ENCODE measurements at regions of chr17 and their contacts with region 1.

Region 1: GRCh38 chr17:13967416-13967815 is 101.9 kb upstream of the COX10 start:
- DNase-seq: no peak
- H3K4me3 ChIP-seq: no peak overlapping the region
- CTCF ChIP-seq: no peak

Region 2: GRCh38 chr17:14004927-14005620 is 37.7 kb after region 1 on chr17:
- in situ Hi-C with region 1: loop called (anchors 5 kb)
- DNase-seq: no peak
- H3K4me3 ChIP-seq: no peak overlapping the region
- CTCF ChIP-seq: no peak

Region 3: DNA sequence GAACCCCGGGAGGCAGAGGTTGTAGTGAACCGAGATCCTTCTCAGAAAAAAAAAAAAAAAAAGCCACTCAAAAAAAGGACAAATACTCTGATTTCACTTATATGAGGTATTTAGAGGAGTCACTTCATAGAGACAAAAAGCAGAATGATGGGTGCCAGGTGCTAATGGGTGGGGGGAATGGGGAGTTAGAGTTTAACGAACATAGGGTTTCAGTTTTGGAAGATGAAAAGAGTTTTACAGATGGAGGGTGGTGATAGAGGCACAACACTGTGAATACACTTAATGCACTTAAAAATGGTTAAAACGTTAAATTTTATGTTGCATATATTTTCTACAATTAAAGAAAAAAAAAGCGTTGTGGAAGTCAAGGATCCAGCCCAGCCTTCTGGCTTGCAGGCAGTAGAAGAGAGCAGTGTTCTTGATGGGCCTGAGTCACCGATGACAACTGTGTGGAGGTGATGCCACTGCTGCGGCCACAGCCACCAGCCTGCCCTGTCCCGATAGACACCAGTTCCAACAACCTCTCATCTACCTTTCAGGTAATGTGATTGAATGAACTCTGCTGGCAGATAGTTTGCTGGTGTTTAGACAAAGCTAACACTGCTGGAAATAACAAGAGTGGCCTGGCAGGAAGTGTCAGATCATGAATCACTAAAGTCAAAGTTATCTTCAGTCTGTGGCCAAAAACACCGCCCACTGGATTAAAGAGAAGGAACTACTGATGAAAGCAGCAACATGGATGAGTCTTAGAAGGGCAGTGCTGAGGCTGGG is 52.0 kb after region 1 on chr17:
- in situ Hi-C with region 1: no loop called
- DNase-seq: no peak
- H3K4me3 ChIP-seq: no peak overlapping the region
- CTCF ChIP-seq: no peak

Region 4: DNA sequence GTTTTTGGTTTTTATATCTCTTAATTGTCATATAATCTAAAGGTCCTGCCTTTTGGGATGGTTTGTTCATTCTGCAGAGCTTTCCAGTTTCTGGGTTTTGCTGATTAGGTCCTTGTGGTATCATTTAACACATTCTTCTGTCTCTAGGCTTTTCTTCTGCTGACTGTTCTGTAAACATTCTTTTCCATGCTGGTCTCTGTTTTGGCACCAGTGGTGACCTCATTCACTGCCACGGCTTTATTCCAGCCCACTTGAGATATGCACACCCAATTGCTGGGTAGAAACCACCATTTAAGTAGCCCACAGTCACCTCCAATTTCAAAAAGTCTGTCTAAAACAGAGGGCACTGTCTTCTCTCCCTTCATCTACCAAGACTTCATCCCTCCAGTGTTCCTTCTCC is 70.8 kb after region 1 on chr17:
- in situ Hi-C with region 1: no loop called
- DNase-seq: peak; percentile 74
- H3K4me3 ChIP-seq: no peak overlapping the region
- CTCF ChIP-seq: no peak